HEK293 (cell line): ENCODE measurements at regions of chr10 and their contacts with region 1.

Region 1: DNA sequence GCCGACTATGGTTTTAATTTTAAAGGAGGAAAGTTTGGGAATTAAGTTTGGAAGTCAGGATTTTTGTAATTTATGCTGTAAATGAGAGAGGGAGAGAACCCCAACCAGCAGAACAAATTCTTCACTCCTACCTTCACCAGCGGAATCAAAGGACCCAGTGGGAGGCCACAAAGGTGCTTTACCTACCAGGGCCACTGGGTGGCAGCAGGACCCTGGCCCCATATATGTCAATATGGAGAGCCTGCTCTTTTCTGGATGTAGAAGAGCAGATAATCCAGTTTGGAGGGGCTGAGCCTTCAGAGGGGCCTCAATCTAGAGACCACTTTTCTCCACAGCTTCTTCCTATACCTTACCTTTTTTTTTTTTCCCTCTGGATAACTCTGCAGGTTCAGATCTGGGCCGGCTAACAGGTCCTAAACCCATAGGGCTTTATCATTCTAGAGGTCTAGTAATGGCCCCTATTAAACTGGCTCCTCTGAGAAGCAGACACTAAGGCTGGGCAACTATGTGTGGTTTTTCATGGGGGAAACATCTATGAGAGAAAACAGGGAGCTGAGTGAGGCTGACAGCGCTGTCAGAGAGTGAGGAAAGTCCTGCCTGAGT is 8.5 kb upstream of the SCD start:
- H3K4me3 ChIP-seq: no peak overlapping the region
- H3K27ac ChIP-seq: no peak overlapping the region
- H3K4me1 ChIP-seq: no peaks in the 10 kb centered on the region
- CTCF ChIP-seq: peak; percentile 74

Region 2: GRCh38 chr10:100325158-100325557 is 13.4 kb before region 1 on chr10:
- CTCF ChIA-PET with region 1: interaction called, 12 read pairs
- POLR2A ChIA-PET with region 1: no interaction called
- H3K4me3 ChIP-seq: no peak overlapping the region
- H3K27ac ChIP-seq: no peak overlapping the region
- H3K4me1 ChIP-seq: no peaks in the 10 kb centered on the region
- CTCF ChIP-seq: no peak

Region 3: GRCh38 chr10:100442530-100442929 is 104.0 kb after region 1 on chr10:
- CTCF ChIA-PET with region 1: interaction called, 11 read pairs
- POLR2A ChIA-PET with region 1: no interaction called
- H3K4me3 ChIP-seq: no peak overlapping the region
- H3K27ac ChIP-seq: no peak overlapping the region
- H3K4me1 ChIP-seq: no peaks in the 10 kb centered on the region
- CTCF ChIP-seq: no peak

Region 4: GRCh38 chr10:100612601-100613595 is 274.4 kb after region 1 on chr10:
- CTCF ChIA-PET with region 1: no interaction called
- POLR2A ChIA-PET with region 1: no interaction called
- H3K4me3 ChIP-seq: no peak overlapping the region
- H3K27ac ChIP-seq: no peak overlapping the region
- H3K4me1 ChIP-seq: no peaks in the 10 kb centered on the region
- CTCF ChIP-seq: no peak